WTC11 (cell line): ENCODE measurements at regions of chr13 and their contacts with region 1.

Region 1: DNA sequence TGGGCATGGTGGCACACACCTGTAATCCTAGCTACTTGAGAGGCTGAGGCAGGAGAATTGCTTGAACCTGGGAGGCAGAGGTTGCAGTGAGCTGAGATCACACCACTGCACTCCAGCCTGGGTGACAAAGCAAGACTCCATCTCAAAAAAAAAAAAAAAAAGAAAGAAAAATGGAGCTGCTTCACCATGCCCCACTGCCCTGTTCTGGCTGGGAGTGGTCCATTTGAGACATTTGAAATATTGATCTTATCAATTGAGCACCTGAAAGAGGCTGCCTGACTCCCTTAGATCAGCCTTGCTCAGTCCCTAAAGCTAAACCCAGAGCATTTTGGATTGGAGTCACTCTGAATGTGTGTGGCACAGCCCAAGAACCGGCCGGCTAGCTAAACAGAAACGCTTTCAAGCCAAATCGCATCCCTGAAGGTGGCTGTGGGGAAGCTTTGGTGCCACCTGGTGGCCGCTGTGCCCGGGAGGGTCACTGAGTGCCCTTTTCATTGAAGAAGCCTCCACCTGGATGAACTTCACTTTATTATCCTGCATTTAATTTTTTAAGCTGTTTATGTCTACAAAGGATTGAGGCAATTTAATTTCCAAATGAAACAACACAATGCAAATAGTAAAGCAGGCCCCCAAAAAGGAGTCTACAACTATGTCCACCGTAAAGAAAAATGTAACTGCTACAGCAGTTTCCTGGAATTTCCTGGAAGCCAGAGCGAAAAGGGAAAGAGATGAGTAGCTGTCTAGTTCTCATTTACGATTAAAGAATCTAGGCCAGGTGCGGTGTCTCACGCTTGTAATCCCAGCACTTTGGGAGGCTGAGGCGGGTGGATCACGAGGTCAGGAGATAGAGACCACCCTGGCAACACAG is 53.1 kb upstream of the SERPINE3 start:
- DNase-seq: peak; percentile 89
- ATAC-seq: peak; percentile 84
- H3K4me3 Mint-ChIP-seq: no peak overlapping the region
- H3K27ac Mint-ChIP-seq: no peak overlapping the region
- H3K4me1 Mint-ChIP-seq: peaks cover 45% of the 10 kb centered on the region
- H3K27me3 Mint-ChIP-seq: no peaks in the 10 kb centered on the region
- CTCF ChIP-seq: peak; percentile 89

Region 2: DNA sequence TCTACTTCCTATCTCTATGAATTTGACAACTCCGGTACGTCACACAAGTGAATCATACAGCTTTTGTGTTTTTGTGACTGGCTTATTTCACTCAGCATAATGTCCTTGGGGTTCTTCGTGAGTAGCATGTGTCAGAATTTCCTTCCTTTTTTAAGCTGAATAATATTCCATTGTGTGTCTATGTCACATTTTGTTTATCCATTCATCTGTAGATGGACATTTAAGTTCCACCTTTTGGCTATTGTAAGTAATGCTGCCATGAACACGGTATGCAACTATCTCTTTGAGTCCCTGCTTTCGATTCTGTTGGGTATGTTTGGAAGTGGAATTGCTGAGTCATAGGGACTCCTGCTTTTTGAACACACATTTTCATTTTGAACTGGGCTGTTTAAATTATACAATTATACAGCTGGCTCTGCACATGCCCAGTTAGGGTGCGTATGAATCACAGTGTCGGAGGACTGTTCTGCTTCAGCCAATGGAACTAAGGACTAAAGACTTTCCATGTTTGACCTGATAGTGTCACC is 132.3 kb before region 1 on chr13:
- CTCF ChIA-PET with region 1: interaction called, 120 read pairs
- POLR2A ChIA-PET with region 1: no interaction called
- DNase-seq: no peak
- ATAC-seq: no peak
- H3K4me3 Mint-ChIP-seq: no peak overlapping the region
- H3K27ac Mint-ChIP-seq: peak overlapping the region; percentile 2
- H3K4me1 Mint-ChIP-seq: peaks cover 79% of the 10 kb centered on the region
- H3K27me3 Mint-ChIP-seq: no peaks in the 10 kb centered on the region; the same call in 1 of the 2 replicates
- CTCF ChIP-seq: no peak

Region 3: DNA sequence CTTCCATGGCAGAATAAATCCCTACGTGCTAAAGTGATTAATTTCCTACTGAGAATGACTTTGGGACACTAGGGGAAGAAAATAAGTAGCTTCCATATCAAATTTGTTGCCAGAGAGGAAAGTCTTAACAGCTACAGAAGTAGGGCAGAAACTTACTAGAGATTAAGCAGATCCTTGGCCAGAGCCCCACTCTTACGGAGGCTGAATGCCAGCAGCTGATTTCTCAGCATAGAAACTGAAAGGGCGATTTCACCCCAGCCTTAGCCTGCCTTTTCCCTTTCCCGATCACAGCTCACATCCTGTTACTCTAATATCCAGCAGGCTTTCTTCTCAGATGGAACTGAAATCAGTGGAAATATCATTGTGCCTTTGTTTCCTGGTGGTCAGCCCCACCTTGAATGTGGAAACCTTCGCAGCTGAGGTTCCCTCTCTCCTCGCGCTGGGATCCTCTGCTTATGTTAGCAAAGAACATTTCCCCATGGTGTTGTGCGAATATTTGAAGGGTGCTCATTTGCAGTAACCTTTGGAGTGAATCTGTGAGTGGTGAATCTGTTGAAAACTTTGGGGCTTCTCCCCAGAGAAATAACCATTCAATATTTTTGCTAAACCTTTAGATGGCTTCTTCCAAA is 55.8 kb before region 1 on chr13:
- CTCF ChIA-PET with region 1: interaction called, 59 read pairs
- POLR2A ChIA-PET with region 1: no interaction called
- DNase-seq: no peak
- ATAC-seq: peak; percentile 17; the same call in 1 of the 2 replicates
- H3K4me3 Mint-ChIP-seq: peak overlapping the region; percentile 28; the same call in 1 of the 2 replicates
- H3K27ac Mint-ChIP-seq: peak overlapping the region; percentile 95
- H3K4me1 Mint-ChIP-seq: peaks cover 75% of the 10 kb centered on the region
- H3K27me3 Mint-ChIP-seq: no peaks in the 10 kb centered on the region
- CTCF ChIP-seq: no peak

Region 4: GRCh38 chr13:51262501-51263211 is 23.7 kb before region 1 on chr13:
- CTCF ChIA-PET with region 1: interaction called, 36 read pairs
- POLR2A ChIA-PET with region 1: interaction called, 7 read pairs
- DNase-seq: no peak
- ATAC-seq: peak; percentile 35
- H3K4me3 Mint-ChIP-seq: peak overlapping the region; percentile 14; the same call in 1 of the 2 replicates
- H3K27ac Mint-ChIP-seq: peak overlapping the region; percentile 71
- H3K4me1 Mint-ChIP-seq: peaks cover 55% of the 10 kb centered on the region
- H3K27me3 Mint-ChIP-seq: no peaks in the 10 kb centered on the region
- CTCF ChIP-seq: no peak

Region 5: DNA sequence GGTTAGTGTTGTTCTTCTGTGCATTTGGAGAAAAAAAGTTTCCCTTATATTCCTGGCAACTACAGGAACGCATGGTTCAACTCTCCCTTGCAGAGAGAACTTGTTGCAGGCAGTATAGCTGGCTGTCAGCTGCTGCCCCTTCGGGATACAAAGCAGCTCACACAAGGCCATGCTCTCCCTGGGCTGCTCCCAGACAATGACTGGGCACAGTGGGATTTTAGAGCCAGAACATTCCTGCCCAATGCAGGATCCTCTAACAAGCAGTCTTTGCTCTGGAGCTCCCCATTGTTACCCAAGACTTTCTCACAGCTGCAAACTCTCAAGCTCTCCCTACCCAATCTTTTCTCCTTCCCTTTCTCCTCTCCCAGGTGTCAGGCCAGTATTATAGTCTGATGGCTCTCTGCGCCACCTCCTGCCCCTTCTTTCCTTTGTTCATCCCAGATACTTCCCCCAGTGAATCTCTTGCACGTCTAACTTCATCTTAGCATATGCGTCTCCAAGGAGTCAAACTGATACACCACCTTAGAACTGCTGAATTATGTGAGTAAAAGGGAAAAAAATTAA is 25.7 kb after region 1 on chr13:
- CTCF ChIA-PET with region 1: interaction called, 40 read pairs
- POLR2A ChIA-PET with region 1: no interaction called
- DNase-seq: no peak
- ATAC-seq: peak; percentile 83
- H3K4me3 Mint-ChIP-seq: no peak overlapping the region
- H3K27ac Mint-ChIP-seq: peak overlapping the region; percentile 61; the same call in 1 of the 2 replicates
- H3K4me1 Mint-ChIP-seq: peaks cover 39% of the 10 kb centered on the region
- H3K27me3 Mint-ChIP-seq: peaks cover 10% of the 10 kb centered on the region
- CTCF ChIP-seq: no peak

Region 6: DNA sequence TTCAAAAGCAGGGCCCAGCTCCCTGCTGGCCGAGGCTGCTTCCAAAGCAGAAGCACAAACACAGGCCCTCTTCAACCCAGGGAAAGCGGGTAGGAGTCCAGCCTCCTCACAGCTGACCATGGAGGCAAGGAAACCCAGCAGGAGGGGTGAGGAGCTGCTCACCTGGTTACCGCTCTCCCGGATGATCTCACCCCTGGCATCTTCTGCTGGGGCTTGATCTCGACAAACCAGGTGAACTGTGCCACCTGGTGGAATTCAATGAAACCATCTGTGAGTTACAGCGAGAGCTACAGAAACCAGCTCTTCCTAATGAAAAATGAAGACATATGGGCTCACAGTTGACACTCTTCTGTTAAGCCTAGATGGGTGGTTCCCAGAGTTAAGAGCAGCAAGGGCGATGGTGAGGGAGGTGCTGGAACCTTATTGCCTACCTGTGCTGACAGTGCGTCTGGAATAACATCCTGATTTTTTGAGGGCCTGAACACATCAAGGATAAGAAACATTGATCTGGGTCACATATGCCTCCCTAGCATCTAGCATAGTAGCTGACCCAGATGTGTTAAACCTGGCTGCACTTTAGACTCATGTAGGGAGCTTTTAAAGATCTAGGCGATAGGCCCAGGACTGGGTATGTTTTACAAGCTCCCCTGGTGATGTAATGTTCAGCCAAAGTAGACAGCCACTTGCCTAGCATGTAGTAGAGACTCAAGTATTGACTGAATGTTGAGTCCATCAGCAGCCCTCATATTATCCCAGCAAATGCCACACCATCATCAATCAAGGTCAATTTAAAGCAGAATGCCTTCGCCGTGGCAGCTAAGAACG is 511.5 kb after region 1 on chr13:
- CTCF ChIA-PET with region 1: interaction called, 26 read pairs
- POLR2A ChIA-PET with region 1: no interaction called
- DNase-seq: peak; percentile 66
- ATAC-seq: peak; percentile 84
- H3K4me3 Mint-ChIP-seq: no peak overlapping the region
- H3K27ac Mint-ChIP-seq: no peak overlapping the region
- H3K4me1 Mint-ChIP-seq: peaks cover 45% of the 10 kb centered on the region
- H3K27me3 Mint-ChIP-seq: no peaks in the 10 kb centered on the region
- CTCF ChIP-seq: 0 out of 2 replicates have a peak, but pooled peaks have one; percentile 33